Activated T-helper 2 cell treated with anti-CD3 and anti-CD28 coated beads, Interferon-gamma antibody, Interleukin-2, Interleukin-4, amounts not matched to agents 10 μg/mL and 5 μg/mL and 100 μg/mL, durations not matched to agents 14 hours and 24 hours and 36 hours (primary cell): ENCODE measurements at regions of chrX and their contacts with region 1.

Region 1: GRCh38 chrX:43654431-43655150 is 1.5 kb upstream of the MAOA start:
- DNase-seq: peak; percentile 86
- H3K4me3 Mint-ChIP-seq: peak overlapping the region; percentile 97
- H3K27ac Mint-ChIP-seq: peak overlapping the region; percentile 100
- H3K4me1 Mint-ChIP-seq: peaks cover 17% of the 10 kb centered on the region
- H3K27me3 Mint-ChIP-seq: no peaks in the 10 kb centered on the region

Region 2: GRCh38 chrX:43581888-43582515 is 72.6 kb before region 1 on chrX:
- intact Hi-C with region 1: no loop called
- DNase-seq: no peak
- H3K4me3 Mint-ChIP-seq: no peak overlapping the region
- H3K27ac Mint-ChIP-seq: no peak overlapping the region
- H3K4me1 Mint-ChIP-seq: peaks cover 14% of the 10 kb centered on the region
- H3K27me3 Mint-ChIP-seq: no peaks in the 10 kb centered on the region

Region 3: GRCh38 chrX:43728002-43728401 is 73.4 kb after region 1 on chrX:
- intact Hi-C with region 1: loop called (anchors 5 kb)
- DNase-seq: no peak
- H3K4me3 Mint-ChIP-seq: peak overlapping the region; percentile 33
- H3K27ac Mint-ChIP-seq: peak overlapping the region; percentile 82
- H3K4me1 Mint-ChIP-seq: peaks cover 29% of the 10 kb centered on the region
- H3K27me3 Mint-ChIP-seq: no peaks in the 10 kb centered on the region

Region 4: GRCh38 chrX:43744284-43744683 is 89.7 kb after region 1 on chrX:
- intact Hi-C with region 1: no loop called
- DNase-seq: no peak
- H3K4me3 Mint-ChIP-seq: no peak overlapping the region
- H3K27ac Mint-ChIP-seq: peak overlapping the region; percentile 46
- H3K4me1 Mint-ChIP-seq: peaks cover 13% of the 10 kb centered on the region
- H3K27me3 Mint-ChIP-seq: no peaks in the 10 kb centered on the region